ENCODE measurements at regions of chr15 and their contacts with region 1.

Region 1: GRCh38 chr15:101578437-101578894 is 73.7 kb downstream of the TM2D3 start:
- DNase-seq: peak in 1 of 2 experiments; percentile 47
- H3K4me3 ChIP-seq: no peak overlapping the region
- H3K27ac ChIP-seq: no peak overlapping the region
- H3K4me1 ChIP-seq: peaks cover 50% of the 10 kb centered on the region
- H3K27me3 ChIP-seq: no peaks in the 10 kb centered on the region
- CTCF ChIP-seq: no peak

Region 2: GRCh38 chr15:101294731-101295606 is 283.5 kb before region 1 on chr15 and contains the start of gene SNRPA1:
- CTCF ChIA-PET with region 1: interaction called, 4 read pairs
- POLR2A ChIA-PET with region 1: no interaction called
- intact Hi-C with region 1: loop called (anchors 5 kb)
- DNase-seq: peak; percentile 85 to 95
- H3K4me3 ChIP-seq: peak within 1 kb of the TSS; percentile 93
- H3K27ac ChIP-seq: peak within 1 kb of the TSS; percentile 77
- H3K4me1 ChIP-seq: peaks cover 41% of the 10 kb centered on the region
- H3K27me3 ChIP-seq: no peaks in the 10 kb centered on the region
- CTCF ChIP-seq: no peak
- total RNA-seq, gene SNRPA1: 71.6 and 95.0 TPM in 2 replicates

Region 3: GRCh38 chr15:101489236-101489632 is 89.2 kb before region 1 on chr15:
- CTCF ChIA-PET with region 1: interaction called, 3 read pairs
- POLR2A ChIA-PET with region 1: no interaction called
- intact Hi-C with region 1: loop called (anchors 2 kb)
- DNase-seq: peak in 1 of 2 experiments; percentile 65
- H3K4me3 ChIP-seq: peak overlapping the region; percentile 42; the same call in 1 of the 2 replicates
- H3K27ac ChIP-seq: no peak overlapping the region
- H3K4me1 ChIP-seq: peaks cover 30% of the 10 kb centered on the region
- H3K27me3 ChIP-seq: no peaks in the 10 kb centered on the region
- CTCF ChIP-seq: no peak

Region 4: DNA sequence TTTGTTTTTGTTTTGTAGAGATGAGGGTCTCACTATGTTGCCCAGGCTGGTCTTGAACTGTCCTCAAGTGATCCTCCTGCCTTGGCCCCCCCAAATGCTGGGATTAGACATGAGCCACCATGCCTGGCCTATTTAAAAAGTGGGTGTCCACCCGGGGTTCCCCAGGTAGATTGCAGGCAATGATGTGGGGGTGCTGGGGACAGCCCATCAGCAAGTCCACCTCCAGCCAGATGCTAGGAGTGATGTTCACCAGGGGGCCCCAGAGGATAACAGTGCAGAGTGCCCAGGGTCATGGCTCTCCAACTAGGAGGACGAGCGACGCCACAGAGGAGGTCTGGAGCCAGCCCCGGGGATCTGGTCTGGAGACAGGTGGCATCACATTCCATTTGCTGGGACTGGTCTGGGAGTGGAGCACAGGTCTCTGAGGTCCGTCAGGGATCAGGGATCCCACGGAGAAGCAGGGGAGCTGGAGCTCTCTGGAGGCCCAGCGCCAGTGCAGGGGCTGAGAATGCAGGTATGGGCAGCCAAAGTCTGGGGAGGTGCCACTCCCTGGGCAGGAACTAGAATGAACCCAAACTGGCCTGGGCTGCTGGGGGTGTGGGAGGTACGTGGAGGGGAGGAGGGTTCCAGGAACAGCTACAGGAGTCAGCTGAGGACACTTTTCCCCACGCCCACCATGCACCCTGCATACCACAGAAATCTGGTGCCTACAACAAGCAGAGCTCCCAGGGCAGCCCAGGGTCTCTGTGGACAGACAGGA is 37.8 kb before region 1 on chr15:
- CTCF ChIA-PET with region 1: no interaction called
- POLR2A ChIA-PET with region 1: interaction called, 3 read pairs
- intact Hi-C with region 1: loop called (anchors 2 kb)
- DNase-seq: peak in 1 of 2 experiments; percentile 53
- H3K4me3 ChIP-seq: no peak overlapping the region
- H3K27ac ChIP-seq: no peak overlapping the region
- H3K4me1 ChIP-seq: no peaks in the 10 kb centered on the region
- H3K27me3 ChIP-seq: no peaks in the 10 kb centered on the region
- CTCF ChIP-seq: peak; percentile 52

Region 5: DNA sequence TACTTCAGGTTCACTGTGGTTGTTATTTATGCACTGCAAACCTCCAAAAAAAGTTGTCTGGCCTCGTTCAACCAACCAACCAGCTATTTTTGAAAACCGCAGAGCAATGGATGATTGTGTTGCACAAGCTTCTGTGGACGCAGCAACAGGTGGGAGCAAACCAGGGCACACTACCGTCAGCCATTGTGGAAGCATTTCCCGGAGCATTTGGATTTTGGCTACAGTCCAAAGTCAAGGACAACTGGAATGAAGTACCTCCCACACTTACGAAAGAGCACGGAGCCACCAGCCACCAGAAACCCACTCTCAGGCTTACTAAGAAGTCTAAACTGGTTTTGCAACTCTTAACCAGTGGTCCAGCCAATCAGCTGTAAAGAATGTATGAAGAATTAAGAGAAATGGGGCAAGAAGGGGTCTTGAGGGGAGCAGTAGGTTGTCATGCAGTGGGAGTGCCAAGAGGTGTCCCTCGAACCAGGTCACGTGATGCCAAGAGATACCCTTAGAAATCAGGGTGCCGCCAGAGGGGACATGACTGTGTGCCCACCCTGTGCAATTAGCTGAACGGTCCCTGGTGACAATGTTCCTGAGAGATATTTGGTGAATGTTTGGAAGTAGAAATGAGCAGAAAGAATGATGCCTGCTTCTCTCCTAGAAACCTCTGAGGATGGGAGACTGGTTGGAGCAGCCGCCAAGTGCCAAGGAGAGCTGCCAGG is 20.1 kb before region 1 on chr15:
- CTCF ChIA-PET with region 1: no interaction called
- POLR2A ChIA-PET with region 1: no interaction called
- intact Hi-C with region 1: loop called (anchors 1 kb)
- DNase-seq: peak; percentile 69 to 88
- H3K4me3 ChIP-seq: peak overlapping the region; percentile 16; the same call in 1 of the 2 replicates
- H3K27ac ChIP-seq: peak overlapping the region; percentile 48
- H3K4me1 ChIP-seq: peaks cover 56% of the 10 kb centered on the region
- H3K27me3 ChIP-seq: no peaks in the 10 kb centered on the region
- CTCF ChIP-seq: no peak

Region 6: GRCh38 chr15:101625980-101626379 is 47.5 kb after region 1 on chr15:
- CTCF ChIA-PET with region 1: no interaction called
- POLR2A ChIA-PET with region 1: no interaction called
- intact Hi-C with region 1: no loop called
- DNase-seq: no peak
- H3K4me3 ChIP-seq: no peak overlapping the region
- H3K27ac ChIP-seq: no peak overlapping the region
- H3K4me1 ChIP-seq: peaks cover 13% of the 10 kb centered on the region; the same call in 1 of the 2 replicates
- H3K27me3 ChIP-seq: no peaks in the 10 kb centered on the region
- CTCF ChIP-seq: no peak

Region 7: GRCh38 chr15:101641166-101641764 is 62.8 kb after region 1 on chr15:
- CTCF ChIA-PET with region 1: interaction called, 4 read pairs
- POLR2A ChIA-PET with region 1: no interaction called
- intact Hi-C with region 1: loop called (anchors 1 kb)
- DNase-seq: peak; percentile 73 to 74
- H3K4me3 ChIP-seq: no peak overlapping the region
- H3K27ac ChIP-seq: no peak overlapping the region
- H3K4me1 ChIP-seq: peaks cover 30% of the 10 kb centered on the region
- H3K27me3 ChIP-seq: no peaks in the 10 kb centered on the region
- CTCF ChIP-seq: peak; percentile 98

Region 8: GRCh38 chr15:101852356-101852755 is 273.9 kb after region 1 on chr15:
- CTCF ChIA-PET with region 1: no interaction called
- POLR2A ChIA-PET with region 1: no interaction called
- intact Hi-C with region 1: no loop called
- DNase-seq: no peak
- H3K4me3 ChIP-seq: no peak overlapping the region
- H3K27ac ChIP-seq: no peak overlapping the region
- H3K4me1 ChIP-seq: no peaks in the 10 kb centered on the region
- H3K27me3 ChIP-seq: no peaks in the 10 kb centered on the region; the same call in 1 of the 2 replicates
- CTCF ChIP-seq: no peak